Lower leg skin (tissue), 4 donors: ENCODE measurements at regions of chr4 and their contacts with region 1.

Region 1: GRCh38 chr4:41661442-41662076 is 87.0 kb downstream of the PHOX2B start:
- DNase-seq: peak; percentile 37 to 89
- H3K4me3 ChIP-seq: no peak overlapping the region
- CTCF ChIP-seq: no peak
- POLR2A ChIP-seq: no peak

Region 2: GRCh38 chr4:41281038-41281634 is 380.4 kb before region 1 on chr4:
- intact Hi-C with region 1: loop called (anchors 5 kb)
- DNase-seq: peak in 1 of 2 donors; percentile 65
- H3K4me3 ChIP-seq: no peak overlapping the region
- CTCF ChIP-seq: peak in 1 of 3 donors; percentile 60
- POLR2A ChIP-seq: no peak

Region 3: DNA sequence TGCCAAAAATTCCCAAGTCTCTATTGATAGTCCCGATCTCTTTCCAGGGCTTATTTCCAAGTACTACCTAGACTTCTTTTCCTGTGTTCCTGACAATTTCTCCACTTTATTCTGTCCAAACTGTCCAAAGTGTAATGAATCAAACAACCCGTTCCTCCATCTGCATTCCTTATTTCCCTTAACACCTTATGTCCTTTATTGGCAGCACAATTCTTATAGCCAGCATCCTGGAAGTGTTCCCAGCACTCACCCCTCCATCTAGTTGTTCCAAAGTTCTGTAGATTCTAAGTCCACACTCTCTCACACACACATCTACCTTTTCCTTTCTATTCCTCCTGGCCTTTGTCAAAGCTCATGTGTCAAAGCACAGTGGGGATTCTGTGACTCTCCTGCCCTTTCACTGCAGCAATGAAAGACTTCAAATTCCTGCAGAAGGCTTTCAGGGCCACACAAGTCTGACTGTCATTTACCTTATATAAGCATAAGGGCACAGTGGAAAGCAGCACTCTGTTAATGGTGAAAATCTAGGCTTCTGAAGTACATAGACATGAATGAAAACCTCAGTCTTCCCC is 101.5 kb before region 1 on chr4:
- intact Hi-C with region 1: no loop called
- DNase-seq: no peak
- H3K4me3 ChIP-seq: no peak overlapping the region
- CTCF ChIP-seq: no peak
- POLR2A ChIP-seq: no peak

Region 4: DNA sequence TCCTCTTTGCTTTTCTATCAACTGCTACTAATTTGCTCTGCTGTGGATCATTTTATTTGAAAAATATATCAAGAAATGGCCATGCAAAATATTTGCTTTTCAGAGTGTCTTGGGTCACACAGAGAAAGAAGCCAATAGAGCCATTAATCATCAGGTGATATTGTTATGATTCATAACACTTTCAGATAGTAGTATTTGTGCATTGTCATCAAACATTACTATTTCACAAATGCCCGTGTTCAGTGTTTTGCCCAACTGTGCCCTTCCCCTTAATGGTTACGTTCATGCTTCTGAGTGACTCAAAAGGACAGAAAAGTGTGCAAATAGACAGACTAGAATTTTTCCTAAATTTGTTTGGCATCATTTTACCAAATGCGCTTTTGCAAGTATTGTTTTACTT is 40.4 kb after region 1 on chr4:
- intact Hi-C with region 1: no loop called
- DNase-seq: no peak
- H3K4me3 ChIP-seq: no peak overlapping the region
- CTCF ChIP-seq: no peak
- POLR2A ChIP-seq: no peak